Heart right ventricle (tissue), 16 donors: ENCODE measurements at regions of chr4 and their contacts with region 1.

Region 1: DNA sequence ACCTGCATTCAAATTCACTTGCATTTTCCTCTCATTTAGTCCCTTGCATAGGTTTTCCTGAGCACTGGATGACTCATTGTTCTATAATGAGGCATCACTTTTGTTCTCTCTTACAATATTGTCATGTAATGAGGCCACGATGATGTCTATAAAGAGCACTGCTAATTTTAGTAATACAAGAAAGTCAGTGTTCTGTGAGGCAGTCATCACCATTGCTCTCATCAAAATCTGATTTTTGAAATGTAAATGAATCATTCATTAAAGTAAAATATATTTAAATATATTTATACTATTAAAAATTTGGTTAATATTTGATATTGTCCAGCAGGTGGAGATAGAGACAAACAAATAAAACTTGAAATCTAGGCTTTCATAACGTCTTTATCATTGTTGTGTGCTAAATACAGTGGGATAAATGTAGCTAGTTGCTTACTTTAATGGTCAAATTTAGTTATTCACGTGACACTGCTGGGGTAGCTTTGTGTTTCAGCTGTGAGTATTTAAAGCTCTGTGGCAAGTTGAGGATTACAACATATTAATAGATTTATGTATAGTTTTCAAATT is 15.4 kb downstream of the HMGB2 start:
- DNase-seq: no peak
- ATAC-seq: peak; percentile 28 to 83 (median 70)
- H3K4me3 ChIP-seq: no peak overlapping the region
- H3K27ac ChIP-seq: peak overlapping the region in 2 of 10 donors; percentile 47 to 67
- H3K4me1 ChIP-seq: peaks cover 0 to 18% (median 10%) of the 10 kb centered on the region in 9 donors
- H3K27me3 ChIP-seq: no peaks in the 10 kb centered on the region
- CTCF ChIP-seq: peak; percentile 20 to 73 (median 52)

Region 2: DNA sequence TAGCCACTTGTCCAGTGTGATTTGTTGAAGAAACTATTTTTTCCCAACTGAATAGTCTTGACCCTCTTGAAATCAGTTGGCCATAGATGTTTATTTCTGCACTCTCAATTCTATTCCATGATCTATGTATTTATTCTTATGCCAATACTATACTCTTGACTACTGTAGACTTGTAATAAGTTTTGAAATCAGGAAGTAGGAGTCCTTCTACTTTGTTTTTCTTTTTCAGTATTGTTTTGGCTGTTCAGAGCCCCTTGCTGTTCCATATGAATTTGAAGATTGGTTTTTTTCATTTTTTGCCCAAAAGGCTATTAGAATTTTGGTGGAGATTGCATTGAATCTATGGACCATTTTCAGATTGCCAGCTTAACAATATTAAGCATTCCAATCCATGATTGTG is 62.3 kb after region 1 on chr4:
- intact Hi-C with region 1: no loop called
- DNase-seq: no peak
- ATAC-seq: no peak
- H3K4me3 ChIP-seq: no peak overlapping the region
- H3K27ac ChIP-seq: no peak overlapping the region
- H3K4me1 ChIP-seq: peaks cover 0 to 10% (median 0%) of the 10 kb centered on the region in 9 donors
- H3K27me3 ChIP-seq: no peaks in the 10 kb centered on the region
- CTCF ChIP-seq: no peak

Region 3: GRCh38 chr4:173413036-173413435 is 94.3 kb after region 1 on chr4:
- intact Hi-C with region 1: loop called (anchors 1 to 5 kb)
- DNase-seq: no peak
- ATAC-seq: peak in 1 of 8 donors; percentile 42
- H3K4me3 ChIP-seq: no peak overlapping the region
- H3K27ac ChIP-seq: peak overlapping the region in 1 of 10 donors; percentile 17
- H3K4me1 ChIP-seq: peaks cover 0 to 76% (median 0%) of the 10 kb centered on the region in 9 donors
- H3K27me3 ChIP-seq: no peaks in the 10 kb centered on the region
- CTCF ChIP-seq: no peak

Region 4: DNA sequence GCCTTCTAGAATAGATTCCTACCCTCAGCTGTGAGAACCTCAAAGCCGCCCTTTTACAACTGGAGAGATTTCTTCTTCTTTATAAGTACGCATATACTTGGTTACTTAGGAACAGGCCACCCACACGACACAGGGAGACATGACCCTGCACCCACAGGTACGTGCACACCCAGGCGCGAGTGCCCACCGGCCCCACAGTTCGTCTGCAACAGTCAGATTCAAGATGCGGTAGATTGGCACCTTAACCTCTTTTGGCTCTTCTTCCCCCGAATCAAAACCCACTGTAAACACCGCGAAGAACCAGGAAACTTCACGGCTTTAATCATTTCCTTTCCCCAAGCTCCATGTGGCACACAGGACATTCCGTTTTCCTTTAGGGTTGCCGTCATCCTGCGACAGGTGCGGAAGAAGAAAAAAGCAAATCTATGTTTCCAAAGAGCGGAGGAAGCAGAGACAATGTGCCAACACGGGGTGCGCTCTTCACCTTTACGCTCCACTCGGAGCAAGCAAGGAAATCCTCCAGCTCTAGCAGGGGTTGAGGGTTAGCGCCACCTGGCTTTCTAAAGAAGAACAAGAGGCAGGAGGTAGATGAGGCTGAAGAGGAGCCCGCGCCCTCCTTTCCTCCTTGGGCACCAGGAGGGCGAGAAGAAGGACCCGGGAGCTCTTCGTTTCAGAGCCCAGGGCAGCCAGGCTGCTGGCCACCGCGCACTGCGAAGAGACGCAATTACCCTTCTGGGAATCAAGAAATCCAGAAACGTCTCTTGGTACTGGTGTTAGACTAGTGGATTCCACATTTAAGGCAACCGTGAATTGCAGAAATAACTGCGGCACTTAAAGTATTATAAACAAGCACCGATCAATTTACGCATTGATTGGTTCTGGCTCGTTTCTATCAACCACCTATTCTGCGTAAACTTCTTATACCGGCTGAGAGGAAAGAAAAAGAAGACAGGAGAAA is 175.6 kb after region 1 on chr4:
- intact Hi-C with region 1: loop called in 6 of 10 experiments (anchors 5 to 10 kb)
- DNase-seq: peak; percentile 29 to 60
- ATAC-seq: peak; percentile 85 to 95 (median 91)
- H3K4me3 ChIP-seq: peak overlapping the region in 9 of 10 donors; percentile 19 to 54 (median 48)
- H3K27ac ChIP-seq: peak overlapping the region in 1 of 10 donors; percentile 27
- H3K4me1 ChIP-seq: peaks cover 0 to 38% (median 9%) of the 10 kb centered on the region in 9 donors
- H3K27me3 ChIP-seq: peaks cover 0 to 24% (median 0%) of the 10 kb centered on the region in 7 donors
- CTCF ChIP-seq: peak; percentile 49 to 86 (median 77)